Dendritic cell treated with granulocyte-macrophage colony-stimulating factor and Interleukin-4, amounts not matched to agents 40 ng/mL and 50 ng/mL, for 4 days (primary cell): ENCODE measurements at regions of chr5 and their contacts with region 1.

Region 1: GRCh38 chr5:54610197-54610944 is 92.8 kb downstream of the SNX18 start:
- H3K4me3 Mint-ChIP-seq: peak overlapping the region; percentile 23
- H3K27ac Mint-ChIP-seq: peak overlapping the region; percentile 82
- H3K4me1 Mint-ChIP-seq: peaks cover 66% of the 10 kb centered on the region
- H3K27me3 Mint-ChIP-seq: no peaks in the 10 kb centered on the region

Region 2: DNA sequence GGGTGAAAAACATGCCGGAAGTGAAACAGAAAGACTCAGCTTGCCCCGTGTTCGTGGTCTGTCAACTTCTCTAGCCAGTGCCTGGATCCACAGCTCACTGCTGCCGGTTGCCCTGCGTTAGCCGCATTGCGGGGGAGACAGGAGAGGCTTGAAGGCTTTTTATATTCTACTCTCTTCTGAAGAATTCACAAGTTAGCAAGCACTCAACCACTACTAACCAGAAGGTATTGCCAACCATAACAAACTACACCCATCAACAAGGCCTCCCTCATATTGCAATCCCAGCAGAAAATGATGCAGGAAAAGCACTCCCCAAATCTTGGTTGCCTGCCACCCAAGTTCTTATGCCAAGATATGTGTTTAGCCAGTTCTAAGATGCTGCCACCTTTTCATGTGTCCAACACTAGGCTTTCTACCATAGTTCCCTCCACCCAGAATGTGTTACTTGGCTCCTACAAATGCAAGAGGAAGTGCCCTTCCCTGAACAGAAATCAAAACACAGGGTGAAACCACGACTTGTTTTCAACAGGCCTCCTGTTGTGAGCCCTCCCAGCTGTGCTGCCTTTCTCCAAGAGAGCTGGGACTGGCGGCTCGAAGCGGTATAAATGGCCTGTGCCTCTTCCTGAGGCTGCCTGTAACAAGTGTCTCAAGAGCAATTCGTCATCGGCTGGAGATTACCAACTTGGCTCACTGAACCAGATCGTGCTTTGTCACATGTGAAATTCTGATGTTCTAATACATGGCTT is 36.2 kb after region 1 on chr5:
- intact Hi-C with region 1: loop called (anchors 5 kb)
- H3K4me3 Mint-ChIP-seq: peak overlapping the region; percentile 55
- H3K27ac Mint-ChIP-seq: peak overlapping the region; percentile 95
- H3K4me1 Mint-ChIP-seq: peaks cover 53% of the 10 kb centered on the region
- H3K27me3 Mint-ChIP-seq: no peaks in the 10 kb centered on the region

Region 3: GRCh38 chr5:54738118-54738972 is 128.0 kb after region 1 on chr5:
- intact Hi-C with region 1: no loop called
- H3K4me3 Mint-ChIP-seq: peak overlapping the region; percentile 49
- H3K27ac Mint-ChIP-seq: peak overlapping the region; percentile 73
- H3K4me1 Mint-ChIP-seq: peaks cover 54% of the 10 kb centered on the region
- H3K27me3 Mint-ChIP-seq: peaks cover 3% of the 10 kb centered on the region

Region 4: GRCh38 chr5:55037046-55037771 is 426.8 kb after region 1 on chr5:
- intact Hi-C with region 1: no loop called
- H3K4me3 Mint-ChIP-seq: no peak overlapping the region
- H3K27ac Mint-ChIP-seq: no peak overlapping the region
- H3K4me1 Mint-ChIP-seq: no peaks in the 10 kb centered on the region
- H3K27me3 Mint-ChIP-seq: no peaks in the 10 kb centered on the region